ENCODE measurements at regions of chr16 and their contacts with region 1.

Region 1: GRCh38 chr16:19375561-19376158 is 42.0 kb upstream of the TMC5 start:
- DNase-seq: peak in 7 of 10 donors; percentile 15 to 58 (median 45)
- H3K4me3 ChIP-seq: no peak overlapping the region
- H3K27ac ChIP-seq: no peak overlapping the region
- H3K27me3 ChIP-seq: no peaks in the 10 kb centered on the region
- CTCF ChIP-seq: peak; percentile 71 to 96 (median 88)

Region 2: GRCh38 chr16:18969050-18969854 is 406.4 kb before region 1 on chr16:
- intact Hi-C with region 1: no loop called
- DNase-seq: peak; percentile 81 to 95 (median 92)
- H3K4me3 ChIP-seq: peak overlapping the region in 58 of 59 donors; percentile 19 to 70 (median 48)
- H3K27ac ChIP-seq: peak overlapping the region in 29 of 59 donors; percentile 2 to 82 (median 46)
- H3K27me3 ChIP-seq: no peaks in the 10 kb centered on the region
- CTCF ChIP-seq: peak; percentile 89 to 99 (median 97)

Region 3: DNA sequence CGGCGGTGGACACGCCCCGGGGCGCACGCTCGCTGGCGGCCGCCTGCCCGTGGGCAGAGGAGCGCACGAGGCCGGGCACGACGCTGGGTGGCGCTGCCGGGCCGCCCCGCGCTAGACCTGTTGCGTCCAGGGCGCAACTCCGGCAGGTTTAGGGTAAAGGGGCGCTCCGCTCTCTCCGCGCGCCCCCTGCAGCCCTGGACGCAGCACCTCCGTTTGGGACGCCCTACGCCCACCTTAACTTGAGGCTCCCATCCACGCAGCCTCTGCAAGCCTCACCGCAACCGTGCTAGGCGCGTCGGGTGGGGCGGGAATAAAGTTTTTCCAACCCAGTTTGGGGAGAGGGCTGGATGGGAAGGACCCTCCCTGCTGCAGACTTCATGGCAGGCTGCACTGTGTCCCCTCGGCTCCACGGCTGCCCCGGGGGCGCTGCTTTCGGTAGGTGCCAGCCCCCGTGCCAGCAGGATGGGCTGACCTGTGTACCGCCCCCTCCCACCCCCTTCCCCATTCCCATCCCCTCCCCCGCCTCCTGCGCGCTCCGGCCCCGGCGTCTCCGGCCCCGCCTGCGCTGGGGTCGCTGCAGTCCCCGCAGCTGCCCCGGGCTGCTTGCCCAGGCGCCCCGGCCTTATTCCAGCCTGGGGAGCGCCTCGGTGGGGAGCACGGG is 207.8 kb before region 1 on chr16 and contains the start of gene SYT17:
- intact Hi-C with region 1: loop called in 1 of 2 experiments (anchors 5 kb)
- DNase-seq: peak in 6 of 10 donors; percentile 17 to 75 (median 52)
- H3K4me3 ChIP-seq: peak within 1 kb of the TSS; percentile 23 to 69 (median 55)
- H3K27ac ChIP-seq: peak within 1 kb of the TSS in 53 of 59 donors; percentile 14 to 88 (median 70)
- H3K27me3 ChIP-seq: peaks cover 0 to 56% (median 18%) of the 10 kb centered on the region in 45 donors
- CTCF ChIP-seq: peak; percentile 14 to 83 (median 62)
- total RNA-seq, gene SYT17: 10.7 to 47.8 (median 28.1) TPM

Region 4: GRCh38 chr16:19542138-19542821 is 166.6 kb after region 1 on chr16:
- intact Hi-C with region 1: no loop called
- DNase-seq: no peak
- H3K4me3 ChIP-seq: no peak overlapping the region
- H3K27ac ChIP-seq: peak overlapping the region in 51 of 59 donors; percentile 6 to 98 (median 60)
- H3K27me3 ChIP-seq: no peaks in the 10 kb centered on the region
- CTCF ChIP-seq: no peak

Measured in dorsolateral prefrontal cortex (tissue), 120 donors.